Colonic mucosa (tissue), 4 donors: ENCODE measurements at regions of chr9 and their contacts with region 1.

Region 1: DNA sequence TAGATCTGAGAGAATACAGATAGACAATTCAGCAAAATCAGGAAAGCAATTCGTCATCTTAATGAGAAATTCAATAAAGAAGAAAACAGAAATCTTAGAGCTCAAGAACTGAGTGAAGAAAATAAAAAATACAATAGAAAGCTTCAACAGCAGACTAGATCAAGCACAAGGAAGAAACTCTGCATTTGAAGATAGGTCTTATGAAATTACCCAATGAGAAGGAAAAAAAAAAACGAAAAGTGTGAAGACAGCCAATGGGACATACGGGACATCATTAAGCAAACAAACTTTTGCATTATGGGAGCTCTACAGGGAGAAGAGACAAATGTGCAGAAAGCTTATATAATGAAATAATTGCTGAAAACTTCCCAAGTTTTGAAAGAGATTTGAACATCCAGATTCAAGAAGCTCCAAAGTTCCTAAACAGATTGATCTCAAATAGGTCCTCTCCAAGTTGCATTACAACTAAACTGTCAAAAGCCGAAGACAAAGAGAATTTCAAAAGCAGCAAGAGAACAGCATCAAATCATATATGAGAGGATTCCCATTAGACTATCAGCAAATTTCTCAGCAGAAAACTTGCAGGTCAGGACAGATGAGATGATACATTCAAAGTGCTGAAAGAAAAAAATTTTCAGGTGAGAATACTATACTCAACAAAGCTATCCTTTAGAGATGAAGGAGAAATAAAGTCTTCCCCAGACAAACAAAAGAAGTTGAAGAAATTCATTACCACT is 10.8 kb upstream of the RLN2 start:
- DNase-seq: no peak
- H3K4me3 ChIP-seq: no peak overlapping the region
- H3K27ac ChIP-seq: no peak overlapping the region
- H3K4me1 ChIP-seq: no peaks in the 10 kb centered on the region
- H3K27me3 ChIP-seq: no peaks in the 10 kb centered on the region
- CTCF ChIP-seq: no peak

Region 2: GRCh38 chr9:5292141-5292540 is 23.2 kb before region 1 on chr9:
- intact Hi-C with region 1: loop called (anchors 2 kb)
- DNase-seq: no peak
- H3K4me3 ChIP-seq: no peak overlapping the region
- H3K27ac ChIP-seq: no peak overlapping the region
- H3K4me1 ChIP-seq: no peaks in the 10 kb centered on the region
- H3K27me3 ChIP-seq: no peaks in the 10 kb centered on the region
- CTCF ChIP-seq: no peak

Region 3: GRCh38 chr9:5440421-5440820 is 125.1 kb after region 1 on chr9:
- intact Hi-C with region 1: no loop called
- DNase-seq: no peak
- H3K4me3 ChIP-seq: no peak overlapping the region
- H3K27ac ChIP-seq: no peak overlapping the region
- H3K4me1 ChIP-seq: no peaks in the 10 kb centered on the region
- H3K27me3 ChIP-seq: no peaks in the 10 kb centered on the region
- CTCF ChIP-seq: no peak

Region 4: GRCh38 chr9:5450359-5451091 is 135.2 kb after region 1 on chr9 and contains the start of gene CD274:
- intact Hi-C with region 1: no loop called
- DNase-seq: peak; percentile 94
- H3K4me3 ChIP-seq: peak within 1 kb of the TSS; percentile 49
- H3K27ac ChIP-seq: peak within 1 kb of the TSS; percentile 94
- H3K4me1 ChIP-seq: no peaks in the 10 kb centered on the region
- H3K27me3 ChIP-seq: no peaks in the 10 kb centered on the region
- CTCF ChIP-seq: peak; percentile 61
- total RNA-seq, gene CD274: 1.6 to 2.0 TPM